ENCODE measurements at regions of chr9 and their contacts with region 1.

Region 1: GRCh38 chr9:93566408-93567270 is 9.7 kb upstream of the PHF2 start:
- DNase-seq: peak; percentile 94 to 100 (median 99)
- ATAC-seq: peak; percentile 99
- H3K4me3 ChIP-seq: peak overlapping the region; percentile 76
- H3K4me3 Mint-ChIP-seq: peak overlapping the region; percentile 80 to 91 (median 86)
- H3K27ac ChIP-seq: peak overlapping the region; percentile 92
- H3K27ac Mint-ChIP-seq: peak overlapping the region; percentile 84 to 96 (median 93)
- H3K4me1 ChIP-seq: peaks cover 8 to 9% of the 10 kb centered on the region in 2 donors
- H3K4me1 Mint-ChIP-seq: peaks cover 10 to 25% (median 20%) of the 10 kb centered on the region in 7 donors
- H3K27me3 ChIP-seq: no peaks in the 10 kb centered on the region
- H3K27me3 Mint-ChIP-seq: no peaks in the 10 kb centered on the region

Region 2: DNA sequence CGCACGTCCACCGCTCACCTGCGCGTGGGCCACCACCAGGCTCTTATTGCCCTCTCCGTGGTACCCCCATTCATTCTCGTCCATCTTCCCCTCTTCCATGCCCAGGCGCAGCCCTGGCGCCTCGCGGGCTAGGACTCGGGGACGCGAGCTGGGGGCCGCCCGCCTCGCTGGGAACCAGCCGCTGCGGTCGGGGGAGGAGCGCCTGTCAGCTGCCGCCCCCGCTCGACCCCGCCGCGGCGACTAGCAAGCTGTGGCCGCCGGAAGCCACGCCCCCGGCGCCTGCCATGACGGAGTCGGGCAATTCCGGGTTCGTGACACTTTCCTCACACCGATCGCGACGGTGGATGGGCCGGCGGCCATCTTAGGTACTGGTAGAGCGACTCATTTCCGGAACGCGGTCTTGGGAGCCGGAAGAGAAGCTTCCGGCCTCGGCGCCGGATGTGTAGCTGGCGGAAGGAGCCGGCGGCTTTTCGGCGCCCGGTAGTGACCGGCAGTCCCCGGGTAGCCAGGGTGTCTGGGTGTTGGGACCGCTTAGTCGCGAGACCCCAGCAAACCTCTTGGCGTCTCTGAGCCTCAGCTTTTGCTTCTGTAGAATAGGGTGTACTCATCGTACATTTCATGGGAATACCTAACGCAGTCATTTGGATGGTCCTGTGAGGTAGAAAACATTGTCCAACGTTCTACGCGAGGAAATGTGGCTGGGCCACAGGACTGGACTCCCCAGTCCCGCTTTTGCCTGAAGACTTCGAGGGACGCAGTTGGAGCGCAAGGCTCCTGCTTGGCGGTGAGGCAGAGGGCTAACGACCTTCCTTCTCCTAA is 896.5 kb before region 1 on chr9 and contains the start of gene IPPK:
- CTCF ChIA-PET with region 1: no interaction called
- POLR2A ChIA-PET with region 1: no interaction called
- intact Hi-C with region 1: loop called (anchors 1 to 10 kb)
- DNase-seq: peak; percentile 92 to 99 (median 96)
- ATAC-seq: peak; percentile 98
- H3K4me3 ChIP-seq: peak within 1 kb of the TSS; percentile 100
- H3K4me3 Mint-ChIP-seq: peak within 1 kb of the TSS; percentile 83 to 98 (median 95)
- H3K27ac ChIP-seq: peak within 1 kb of the TSS; percentile 91
- H3K27ac Mint-ChIP-seq: peak within 1 kb of the TSS; percentile 90 to 98 (median 95)
- H3K4me1 ChIP-seq: peaks cover 16 to 23% of the 10 kb centered on the region in 2 donors
- H3K4me1 Mint-ChIP-seq: peaks cover 27 to 46% (median 36%) of the 10 kb centered on the region in 7 donors
- H3K27me3 ChIP-seq: no peaks in the 10 kb centered on the region
- H3K27me3 Mint-ChIP-seq: no peaks in the 10 kb centered on the region
- total RNA-seq, gene IPPK: 5.9 to 12.8 (median 7.4) TPM

Region 3: GRCh38 chr9:93064392-93065134 is 502.1 kb before region 1 on chr9:
- CTCF ChIA-PET with region 1: no interaction called
- POLR2A ChIA-PET with region 1: interaction called, 5 read pairs
- intact Hi-C with region 1: loop called in 1 of 2 experiments (anchors 1 kb)
- DNase-seq: peak; percentile 54 to 95 (median 90)
- ATAC-seq: peak; percentile 96
- H3K4me3 ChIP-seq: peak overlapping the region; percentile 90
- H3K4me3 Mint-ChIP-seq: peak overlapping the region; percentile 87 to 97 (median 92)
- H3K27ac ChIP-seq: peak overlapping the region; percentile 88
- H3K27ac Mint-ChIP-seq: peak overlapping the region; percentile 97 to 100 (median 99)
- H3K4me1 ChIP-seq: peaks cover 63 to 87% of the 10 kb centered on the region in 2 donors
- H3K4me1 Mint-ChIP-seq: peaks cover 71 to 95% (median 86%) of the 10 kb centered on the region in 7 donors
- H3K27me3 ChIP-seq: no peaks in the 10 kb centered on the region
- H3K27me3 Mint-ChIP-seq: no peaks in the 10 kb centered on the region

Region 4: GRCh38 chr9:93159601-93160471 is 406.8 kb before region 1 on chr9:
- CTCF ChIA-PET with region 1: interaction called, 3 read pairs
- POLR2A ChIA-PET with region 1: no interaction called
- intact Hi-C with region 1: loop called (anchors 1 kb)
- DNase-seq: peak; percentile 35 to 82 (median 52)
- ATAC-seq: peak; percentile 95
- H3K4me3 ChIP-seq: no peak overlapping the region
- H3K4me3 Mint-ChIP-seq: peak overlapping the region in 1 of 10 donors; percentile 16
- H3K27ac ChIP-seq: no peak overlapping the region
- H3K27ac Mint-ChIP-seq: peak overlapping the region in 3 of 9 donors; percentile 40 to 72 (median 43)
- H3K4me1 ChIP-seq: peaks cover 0 to 5% of the 10 kb centered on the region in 2 donors
- H3K4me1 Mint-ChIP-seq: peaks cover 0 to 24% (median 8%) of the 10 kb centered on the region in 7 donors
- H3K27me3 ChIP-seq: no peaks in the 10 kb centered on the region
- H3K27me3 Mint-ChIP-seq: no peaks in the 10 kb centered on the region

Region 5: DNA sequence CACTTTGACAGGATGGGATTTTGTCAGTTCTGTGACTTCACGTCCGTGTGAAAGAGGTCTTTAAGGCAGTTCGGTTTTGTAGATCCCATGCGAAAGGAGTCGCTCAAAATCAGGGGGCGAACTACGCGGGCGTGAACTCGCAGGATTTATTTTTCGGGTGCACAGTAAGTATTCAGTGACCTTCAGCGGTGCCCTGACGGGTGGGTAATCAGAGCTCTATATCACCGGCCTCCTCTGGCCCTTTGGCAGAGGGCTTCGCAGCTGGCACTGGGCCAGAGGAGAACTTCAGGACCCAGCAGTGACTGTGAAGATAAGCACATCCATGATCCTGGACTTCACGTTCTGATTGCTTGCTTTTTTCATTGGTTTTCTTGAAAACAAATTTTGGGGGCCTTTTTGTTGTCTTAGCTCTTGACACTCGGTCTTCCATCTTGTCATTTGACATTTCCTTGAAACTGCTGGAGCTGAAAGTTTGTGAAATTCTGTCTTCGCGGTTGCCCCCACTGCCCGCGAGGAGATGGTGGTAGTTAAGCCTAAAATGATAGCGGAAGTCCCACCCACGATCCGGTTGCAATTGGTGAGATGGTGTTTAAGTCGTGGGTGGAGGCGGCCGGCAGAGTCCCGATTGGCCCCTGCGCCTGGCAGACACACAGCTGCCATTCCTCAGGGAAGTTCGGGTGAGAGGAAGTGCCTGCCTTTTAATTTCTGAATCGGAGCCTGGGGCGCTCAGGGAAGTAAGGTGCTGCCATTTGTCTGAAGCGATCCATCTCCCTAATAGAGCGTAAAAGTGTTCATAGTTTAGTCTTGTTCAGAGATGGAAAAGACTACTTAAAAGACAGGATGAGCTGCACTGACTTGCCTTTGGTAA is 113.4 kb before region 1 on chr9 and contains the start of gene FAM120AOS:
- CTCF ChIA-PET with region 1: interaction called, 12 read pairs
- POLR2A ChIA-PET with region 1: interaction called, 9 read pairs
- intact Hi-C with region 1: loop called (anchors 1 kb)
- DNase-seq: peak; percentile 50 to 85 (median 76)
- ATAC-seq: peak; percentile 82
- H3K4me3 ChIP-seq: peak within 1 kb of the TSS; percentile 72
- H3K4me3 Mint-ChIP-seq: peak within 1 kb of the TSS; percentile 89 to 100 (median 95)
- H3K27ac ChIP-seq: peak within 1 kb of the TSS; percentile 87
- H3K27ac Mint-ChIP-seq: peak within 1 kb of the TSS; percentile 83 to 96 (median 94)
- H3K4me1 ChIP-seq: peaks cover 31 to 50% of the 10 kb centered on the region in 2 donors
- H3K4me1 Mint-ChIP-seq: peaks cover 39 to 69% (median 57%) of the 10 kb centered on the region in 7 donors
- H3K27me3 ChIP-seq: no peaks in the 10 kb centered on the region
- H3K27me3 Mint-ChIP-seq: no peaks in the 10 kb centered on the region
- total RNA-seq, gene FAM120AOS: 36.7 to 49.5 (median 42.3) TPM

Region 6: GRCh38 chr9:93962561-93963440 is 396.2 kb after region 1 on chr9:
- CTCF ChIA-PET with region 1: no interaction called
- POLR2A ChIA-PET with region 1: no interaction called
- intact Hi-C with region 1: loop called in 1 of 2 experiments (anchors 1 kb)
- DNase-seq: peak; percentile 64 to 83 (median 78)
- ATAC-seq: peak; percentile 90
- H3K4me3 ChIP-seq: no peak overlapping the region
- H3K4me3 Mint-ChIP-seq: peak overlapping the region in 6 of 10 donors; percentile 0 to 35 (median 2)
- H3K27ac ChIP-seq: no peak overlapping the region
- H3K27ac Mint-ChIP-seq: no peak overlapping the region
- H3K4me1 ChIP-seq: peaks cover 9 to 20% of the 10 kb centered on the region in 2 donors
- H3K4me1 Mint-ChIP-seq: peaks cover 26 to 44% (median 28%) of the 10 kb centered on the region in 7 donors
- H3K27me3 ChIP-seq: peaks cover 0 to 25% of the 10 kb centered on the region in 2 donors
- H3K27me3 Mint-ChIP-seq: peaks cover 45 to 67% (median 55%) of the 10 kb centered on the region in 5 donors

Region 7: GRCh38 chr9:95510709-95511615 is 1944.3 kb after region 1 on chr9:
- CTCF ChIA-PET with region 1: no interaction called
- POLR2A ChIA-PET with region 1: no interaction called
- intact Hi-C with region 1: loop called in 1 of 2 experiments (anchors 5 kb)
- DNase-seq: peak; percentile 64 to 87 (median 80)
- ATAC-seq: peak; percentile 75
- H3K4me3 ChIP-seq: peak overlapping the region; percentile 66
- H3K4me3 Mint-ChIP-seq: peak overlapping the region; percentile 90 to 100 (median 96)
- H3K27ac ChIP-seq: peak overlapping the region; percentile 58
- H3K27ac Mint-ChIP-seq: peak overlapping the region; percentile 82 to 94 (median 85)
- H3K4me1 ChIP-seq: peaks cover 14 to 18% of the 10 kb centered on the region in 2 donors
- H3K4me1 Mint-ChIP-seq: peaks cover 26 to 45% (median 39%) of the 10 kb centered on the region in 7 donors
- H3K27me3 ChIP-seq: no peaks in the 10 kb centered on the region
- H3K27me3 Mint-ChIP-seq: peaks cover 0 to 79% (median 3%) of the 10 kb centered on the region in 5 donors

Measured in naive thymus-derived CD4-positive, alpha-beta T cell (primary cell).